Heart right ventricle (tissue), 16 donors: ENCODE measurements at regions of chr1 and their contacts with region 1.

Region 1: GRCh38 chr1:180382317-180383115 is 119.9 kb downstream of the ACBD6 start:
- DNase-seq: no peak
- ATAC-seq: no peak
- H3K4me3 ChIP-seq: no peak overlapping the region
- H3K27ac ChIP-seq: no peak overlapping the region
- H3K4me1 ChIP-seq: no peaks in the 10 kb centered on the region
- H3K27me3 ChIP-seq: no peaks in the 10 kb centered on the region
- CTCF ChIP-seq: no peak

Region 2: DNA sequence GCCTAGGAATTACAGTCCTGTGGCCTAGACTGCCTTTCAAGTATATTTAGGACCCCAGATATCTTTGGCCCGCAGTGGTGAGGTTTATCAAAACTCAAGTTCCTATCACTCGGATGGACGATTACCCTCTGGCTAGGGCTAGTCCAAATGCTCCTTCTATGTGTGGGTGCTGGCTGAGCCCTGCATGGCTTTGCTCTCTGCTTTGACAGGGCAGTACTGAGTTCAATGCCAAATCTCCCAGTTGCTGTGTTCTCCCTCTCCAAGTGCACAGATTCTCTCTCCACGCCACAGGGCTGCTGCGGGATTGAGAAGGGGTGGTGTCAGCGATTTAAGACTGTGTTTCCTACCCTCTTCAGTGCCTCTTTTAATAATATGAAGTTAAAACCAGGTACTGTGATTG is 55.4 kb before region 1 on chr1:
- intact Hi-C with region 1: loop called in 1 of 10 experiments (anchors 5 kb)
- DNase-seq: peak in 1 of 2 donors; percentile 10
- ATAC-seq: peak in 7 of 8 donors; percentile 38 to 91 (median 83)
- H3K4me3 ChIP-seq: no peak overlapping the region
- H3K27ac ChIP-seq: no peak overlapping the region
- H3K4me1 ChIP-seq: peaks cover 0 to 8% (median 0%) of the 10 kb centered on the region in 9 donors
- H3K27me3 ChIP-seq: no peaks in the 10 kb centered on the region
- CTCF ChIP-seq: no peak

Region 3: GRCh38 chr1:180353945-180354344 is 28.6 kb before region 1 on chr1:
- intact Hi-C with region 1: no loop called
- DNase-seq: no peak
- ATAC-seq: no peak
- H3K4me3 ChIP-seq: no peak overlapping the region
- H3K27ac ChIP-seq: no peak overlapping the region
- H3K4me1 ChIP-seq: peaks cover 0 to 8% (median 2%) of the 10 kb centered on the region in 9 donors
- H3K27me3 ChIP-seq: no peaks in the 10 kb centered on the region
- CTCF ChIP-seq: no peak

Region 4: GRCh38 chr1:180435566-180435965 is 53.0 kb after region 1 on chr1:
- intact Hi-C with region 1: no loop called
- DNase-seq: no peak
- ATAC-seq: no peak
- H3K4me3 ChIP-seq: no peak overlapping the region
- H3K27ac ChIP-seq: no peak overlapping the region
- H3K4me1 ChIP-seq: no peaks in the 10 kb centered on the region
- H3K27me3 ChIP-seq: no peaks in the 10 kb centered on the region
- CTCF ChIP-seq: no peak